Activated CD4-positive, alpha-beta memory T cell treated with anti-CD3 and anti-CD28 coated beads, Interleukin-2, amount 10 ng/mL, durations not matched to agents 7 days and 5 days (primary cell): ENCODE measurements at regions of chr7 and their contacts with region 1.

Region 1: DNA sequence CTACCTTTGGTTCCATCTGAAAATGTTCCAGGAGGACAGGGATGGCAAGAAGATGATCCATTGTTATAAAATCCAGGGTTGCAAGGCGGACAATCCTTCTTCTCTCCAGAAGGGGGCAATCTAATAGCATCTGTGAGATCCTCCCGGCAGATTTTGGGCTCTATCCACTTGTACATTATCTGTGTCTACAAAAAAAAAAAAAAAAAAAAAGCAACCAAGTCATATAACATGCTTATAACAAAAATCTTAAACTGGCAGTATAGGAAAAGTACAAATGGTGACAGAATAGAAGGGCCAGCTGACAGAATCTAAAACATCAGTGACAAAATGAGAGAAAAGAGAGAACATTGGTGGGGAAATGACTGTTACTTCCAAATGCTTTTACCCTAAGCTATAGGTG is 132.7 kb downstream of the ELAPOR2 start:
- DNase-seq: no peak
- H3K4me3 Mint-ChIP-seq: no peak overlapping the region
- H3K27ac Mint-ChIP-seq: no peak overlapping the region
- H3K4me1 Mint-ChIP-seq: no peaks in the 10 kb centered on the region
- H3K27me3 Mint-ChIP-seq: peaks cover 10% of the 10 kb centered on the region

Region 2: DNA sequence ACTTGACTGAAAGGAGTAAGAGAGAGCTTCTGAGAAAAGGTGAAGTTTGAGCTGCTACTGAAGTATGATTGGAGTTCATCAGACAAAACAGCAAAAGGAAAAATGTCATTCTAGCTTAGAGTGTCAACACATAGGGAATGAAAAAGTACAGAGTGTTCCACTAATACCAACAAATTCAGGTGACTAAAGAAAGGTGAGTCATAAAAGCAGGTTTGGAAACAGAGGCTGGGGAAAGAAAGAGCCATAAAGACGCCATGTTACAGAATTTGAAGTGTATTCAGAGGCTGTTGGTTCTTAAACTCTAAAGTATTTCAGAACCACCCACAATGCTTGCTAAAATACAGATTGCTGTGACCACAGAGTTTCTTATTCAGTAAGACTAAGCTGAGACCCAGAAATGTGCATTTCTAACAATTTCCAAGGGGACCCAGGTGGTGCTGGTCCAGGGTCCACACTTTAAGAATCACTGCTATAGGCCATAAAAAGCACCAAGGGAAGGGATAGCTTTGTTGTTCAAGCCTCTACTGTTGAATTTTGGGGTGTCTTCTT is 10.4 kb before region 1 on chr7:
- CTCF ChIA-PET with region 1: interaction called, 14 read pairs
- POLR2A ChIA-PET with region 1: no interaction called
- DNase-seq: no peak
- H3K4me3 Mint-ChIP-seq: no peak overlapping the region
- H3K27ac Mint-ChIP-seq: no peak overlapping the region
- H3K4me1 Mint-ChIP-seq: no peaks in the 10 kb centered on the region
- H3K27me3 Mint-ChIP-seq: no peaks in the 10 kb centered on the region

Region 3: DNA sequence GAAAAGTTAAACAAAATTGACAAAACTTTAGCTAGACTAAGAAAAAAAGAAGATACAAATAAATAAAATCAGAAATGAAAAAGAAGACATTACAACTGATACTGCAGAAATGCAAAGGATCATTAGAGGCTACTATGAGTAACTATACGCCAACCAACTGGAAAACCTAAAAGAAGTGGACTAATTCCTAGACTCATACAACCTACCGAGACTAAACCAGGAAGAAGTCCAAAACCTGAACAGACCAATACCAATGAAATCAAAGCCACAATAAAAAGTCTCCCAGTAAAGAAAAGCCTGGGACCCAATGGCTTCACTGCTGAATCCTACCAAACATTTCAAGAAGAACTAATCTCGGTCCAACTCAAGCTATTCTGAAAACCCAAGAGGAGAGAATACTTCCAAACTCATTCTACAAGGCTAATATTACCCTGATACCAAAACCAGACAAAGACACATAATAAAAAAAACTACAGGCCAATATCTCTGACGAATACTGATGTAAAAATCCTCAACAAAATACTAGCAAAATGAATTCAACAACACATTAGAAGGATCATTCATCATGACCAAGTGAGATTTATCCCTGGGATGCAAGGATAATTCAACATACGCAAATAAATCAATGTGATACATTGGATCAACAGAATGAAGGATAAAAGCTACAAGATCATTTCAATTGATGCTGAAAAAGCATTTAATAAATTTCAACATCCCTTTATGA is 112.4 kb after region 1 on chr7:
- CTCF ChIA-PET with region 1: no interaction called
- POLR2A ChIA-PET with region 1: no interaction called
- DNase-seq: no peak
- H3K4me3 Mint-ChIP-seq: peak overlapping the region; percentile 67
- H3K27ac Mint-ChIP-seq: no peak overlapping the region
- H3K4me1 Mint-ChIP-seq: no peaks in the 10 kb centered on the region
- H3K27me3 Mint-ChIP-seq: no peaks in the 10 kb centered on the region

Region 4: GRCh38 chr7:87231256-87231655 is 304.5 kb after region 1 on chr7:
- CTCF ChIA-PET with region 1: interaction called, 10 read pairs
- POLR2A ChIA-PET with region 1: no interaction called
- DNase-seq: no peak
- H3K4me3 Mint-ChIP-seq: no peak overlapping the region
- H3K27ac Mint-ChIP-seq: no peak overlapping the region
- H3K4me1 Mint-ChIP-seq: peaks cover 6% of the 10 kb centered on the region
- H3K27me3 Mint-ChIP-seq: peaks cover 2% of the 10 kb centered on the region